SK-N-SH (cell line): ENCODE measurements at regions of chr16 and their contacts with region 1.

Region 1: GRCh38 chr16:85275533-85276249 is 163.4 kb upstream of the CIBAR2 start:
- DNase-seq: peak; percentile 95
- H3K4me3 ChIP-seq: peak overlapping the region in 1 of 2 experiments; percentile 21; a peak in 1 of 4 replicates
- H3K27ac ChIP-seq: peak overlapping the region in 1 of 2 experiments; percentile 31; a peak in 1 of 4 replicates
- H3K4me1 ChIP-seq: peaks cover 0 to 46% of the 10 kb centered on the region in 2 experiments; a peak in 2 of 4 replicates
- H3K27me3 ChIP-seq: no peaks in the 10 kb centered on the region
- CTCF ChIP-seq: peak; percentile 88
- EP300 ChIP-seq: no peak
- RAD21 ChIP-seq: peak; percentile 94

Region 2: DNA sequence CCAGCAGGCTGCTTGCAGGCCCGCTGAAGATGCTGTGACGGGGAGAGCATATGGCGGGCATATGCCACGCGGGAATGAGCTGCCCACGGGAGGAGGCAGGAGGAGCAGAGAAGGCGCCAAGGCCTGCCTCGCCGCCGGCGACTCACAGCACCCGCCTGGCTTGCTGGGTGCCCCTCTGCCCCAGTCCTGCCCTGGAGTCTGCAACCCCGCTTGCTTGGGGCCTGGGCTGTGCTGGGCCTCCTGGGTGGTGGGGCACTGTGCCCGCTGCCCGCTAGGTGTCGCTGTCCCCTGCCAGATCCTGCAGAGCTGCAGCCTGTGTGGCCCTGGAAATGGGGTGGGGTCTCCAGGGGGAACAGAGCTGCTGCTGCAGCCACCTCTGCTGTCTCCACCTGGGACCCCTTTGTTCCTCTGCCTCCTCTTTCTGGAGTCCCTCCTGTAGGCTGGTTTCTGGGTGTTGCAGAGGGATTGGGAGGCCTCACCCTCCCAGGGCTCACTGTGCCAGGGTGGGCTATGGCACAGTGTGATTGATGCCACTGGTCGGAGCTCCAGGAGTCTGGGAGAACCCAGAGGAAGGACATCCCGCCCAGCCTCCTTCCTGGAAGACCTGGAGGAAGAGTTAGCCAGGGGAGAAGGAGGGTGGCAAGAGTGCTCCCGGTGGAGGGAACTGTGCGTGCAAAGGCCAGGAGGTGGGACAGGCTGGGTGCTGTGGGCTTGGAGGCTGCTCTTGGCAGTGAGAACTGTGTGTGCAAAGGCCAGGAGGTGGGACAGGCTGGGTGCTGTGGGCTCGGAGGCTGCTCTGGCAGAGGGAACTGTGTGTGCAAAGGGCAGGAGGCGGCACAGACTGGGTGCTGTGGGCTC is 22.4 kb before region 1 on chr16:
- CTCF ChIA-PET with region 1: interaction called, 180 read pairs
- POLR2A ChIA-PET with region 1: no interaction called
- DNase-seq: peak; percentile 93
- H3K4me3 ChIP-seq: no peak overlapping the region; a peak in 1 of 4 replicates
- H3K27ac ChIP-seq: peak overlapping the region in 1 of 2 experiments; percentile 60; a peak in 2 of 4 replicates
- H3K4me1 ChIP-seq: peaks cover 0 to 55% of the 10 kb centered on the region in 2 experiments; a peak in 1 of 4 replicates
- H3K27me3 ChIP-seq: no peaks in the 10 kb centered on the region
- CTCF ChIP-seq: peak; percentile 94
- EP300 ChIP-seq: no peak
- RAD21 ChIP-seq: peak; percentile 77

Region 3: DNA sequence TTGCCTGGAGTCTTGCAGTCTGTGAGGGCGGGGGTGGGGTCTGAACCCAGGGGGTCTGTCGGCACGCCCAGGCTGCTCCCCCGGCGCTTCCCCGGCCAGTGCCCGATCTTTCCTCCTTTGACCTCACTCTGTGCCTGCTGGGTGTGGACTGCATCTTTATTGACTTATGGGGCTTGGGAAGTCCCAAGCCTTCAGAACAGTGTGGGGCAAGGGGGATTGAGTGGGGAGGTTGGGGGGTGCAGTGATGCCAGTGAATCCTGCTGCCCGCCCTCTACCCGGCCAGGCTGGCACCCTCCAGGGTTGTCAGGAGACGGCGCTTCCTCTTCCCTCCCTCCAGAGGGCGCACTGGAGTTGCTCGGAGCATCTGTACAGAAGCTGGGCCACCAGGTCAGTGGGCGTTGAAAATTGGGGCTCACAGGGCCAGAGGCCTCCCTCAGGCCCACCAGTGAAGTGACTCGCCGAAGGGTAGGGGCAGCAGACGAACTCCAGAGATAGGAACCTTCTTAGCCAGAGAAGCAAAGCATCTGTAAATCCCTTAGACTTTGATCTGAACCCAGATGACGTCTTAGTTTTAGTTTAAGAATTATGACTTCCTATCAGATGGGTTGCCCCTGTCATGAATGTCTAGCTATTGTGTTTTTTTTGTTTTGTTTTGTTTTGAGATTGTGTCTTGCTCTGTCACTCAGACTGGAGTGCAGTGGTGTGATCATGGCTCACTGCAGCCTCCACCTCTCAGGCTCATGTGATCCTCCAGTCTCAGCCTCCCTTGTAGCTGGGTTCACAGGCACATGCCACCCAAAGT is 21.4 kb after region 1 on chr16:
- CTCF ChIA-PET with region 1: interaction called, 15 read pairs
- POLR2A ChIA-PET with region 1: no interaction called
- DNase-seq: peak; percentile 72
- H3K4me3 ChIP-seq: no peak overlapping the region
- H3K27ac ChIP-seq: no peak overlapping the region
- H3K4me1 ChIP-seq: peaks cover 0 to 27% of the 10 kb centered on the region in 2 experiments; a peak in 1 of 4 replicates
- H3K27me3 ChIP-seq: no peaks in the 10 kb centered on the region
- CTCF ChIP-seq: peak; percentile 74
- EP300 ChIP-seq: no peak
- RAD21 ChIP-seq: peak; percentile 62

Region 4: GRCh38 chr16:85347213-85347591 is 71.5 kb after region 1 on chr16:
- CTCF ChIA-PET with region 1: interaction called, 37 read pairs
- POLR2A ChIA-PET with region 1: interaction called, 5 read pairs
- DNase-seq: peak; percentile 63
- H3K4me3 ChIP-seq: no peak overlapping the region
- H3K27ac ChIP-seq: peak overlapping the region in 1 of 2 experiments; percentile 97; a peak in 1 of 4 replicates
- H3K4me1 ChIP-seq: peaks cover 13 to 60% of the 10 kb centered on the region in 2 experiments; a peak in 2 of 4 replicates
- H3K27me3 ChIP-seq: no peaks in the 10 kb centered on the region
- CTCF ChIP-seq: peak; percentile 45
- EP300 ChIP-seq: no peak
- RAD21 ChIP-seq: peak; percentile 73

Region 5: DNA sequence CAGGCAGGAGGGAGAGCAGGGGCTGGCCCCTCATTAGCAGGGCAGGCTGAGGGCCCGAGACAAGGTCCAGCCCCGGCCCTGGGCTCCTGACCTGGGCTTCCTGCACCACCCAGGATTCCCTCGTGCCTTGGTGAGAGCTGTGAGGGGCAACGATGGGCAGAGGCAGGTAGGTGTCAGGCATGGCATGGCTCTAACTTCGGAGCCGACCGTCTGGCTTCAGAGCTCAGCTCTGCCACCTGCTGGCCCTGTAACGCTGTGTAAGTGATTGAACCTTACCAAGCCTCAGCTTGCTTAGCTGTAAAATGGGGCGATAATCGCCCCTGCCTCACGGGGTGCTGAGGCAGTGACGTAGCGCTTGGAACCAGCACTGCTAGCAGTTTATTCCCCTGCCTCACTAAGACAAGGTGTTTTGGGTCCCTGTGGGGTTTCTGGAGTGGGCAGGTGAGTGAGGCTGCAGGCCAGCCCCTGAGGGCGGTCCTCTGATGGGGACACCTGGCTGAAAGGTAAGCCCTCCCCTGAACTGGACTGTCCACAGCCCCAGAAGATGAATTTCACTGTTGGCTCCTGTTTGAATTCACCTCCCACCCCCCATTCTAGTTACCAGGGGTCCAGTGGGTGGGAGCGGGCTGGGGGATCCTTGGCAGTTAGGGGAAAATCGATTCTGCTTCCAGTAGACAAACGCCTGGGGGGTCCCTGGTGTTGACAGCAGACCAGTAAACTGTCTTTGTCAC is 152.6 kb after region 1 on chr16:
- CTCF ChIA-PET with region 1: interaction called, 13 read pairs
- POLR2A ChIA-PET with region 1: no interaction called
- DNase-seq: peak; percentile 73
- H3K4me3 ChIP-seq: no peak overlapping the region; a peak in 1 of 4 replicates
- H3K27ac ChIP-seq: no peak overlapping the region
- H3K4me1 ChIP-seq: peaks cover 0 to 55% of the 10 kb centered on the region in 2 experiments; a peak in 1 of 4 replicates
- H3K27me3 ChIP-seq: no peaks in the 10 kb centered on the region
- CTCF ChIP-seq: peak; percentile 57
- EP300 ChIP-seq: no peak
- RAD21 ChIP-seq: peak; percentile 63

Region 6: DNA sequence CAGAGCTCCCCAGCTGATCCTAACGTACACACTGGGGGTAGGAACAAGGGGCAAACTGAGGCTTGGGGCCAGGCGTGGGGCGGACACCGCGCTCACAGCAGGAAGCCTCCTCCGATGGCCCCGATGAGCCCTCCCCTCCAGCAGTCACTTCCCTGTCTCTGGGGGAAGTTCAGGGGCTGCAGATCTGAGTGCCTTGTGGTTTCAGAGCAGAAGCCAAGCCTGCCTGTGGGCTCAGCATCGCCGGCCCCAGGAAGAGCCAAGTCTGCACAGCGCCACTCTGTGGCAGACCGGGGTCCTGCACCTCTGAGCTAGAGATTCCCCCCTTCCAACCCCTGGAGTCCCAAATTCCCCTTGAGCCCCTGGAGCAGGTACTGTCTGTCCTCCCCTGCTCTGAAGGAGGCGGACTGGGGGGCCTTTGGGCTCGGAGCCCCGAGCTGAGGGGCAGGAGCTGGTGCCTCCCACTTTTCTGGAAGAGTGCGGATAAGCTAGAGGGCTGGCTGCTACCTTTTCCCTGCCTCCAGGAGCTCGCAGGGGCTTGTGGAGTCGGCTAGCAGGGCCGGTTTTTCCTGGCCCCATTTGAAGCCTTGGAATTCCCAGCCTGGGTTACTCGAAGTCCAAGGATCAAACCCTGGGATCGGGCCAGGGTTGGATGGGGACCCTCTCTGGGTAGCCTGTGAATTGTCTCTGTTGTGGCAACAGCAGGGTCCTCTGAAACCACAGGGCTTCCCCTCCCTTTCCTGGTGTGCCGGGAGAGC is 340.3 kb after region 1 on chr16:
- CTCF ChIA-PET with region 1: interaction called, 15 read pairs
- POLR2A ChIA-PET with region 1: no interaction called
- DNase-seq: peak; percentile 86
- H3K4me3 ChIP-seq: peak overlapping the region; percentile 42 to 86; a peak in 2 of 4 replicates
- H3K27ac ChIP-seq: peak overlapping the region in 1 of 2 experiments; percentile 97; a peak in 2 of 4 replicates
- H3K4me1 ChIP-seq: peaks cover 9 to 64% of the 10 kb centered on the region in 2 experiments
- H3K27me3 ChIP-seq: no peaks in the 10 kb centered on the region
- CTCF ChIP-seq: peak; percentile 91
- EP300 ChIP-seq: no peak
- RAD21 ChIP-seq: peak; percentile 65